Activated T-helper 1 cell treated with anti-CD3 and anti-CD28 coated beads, Interleukin-12 subunit alpha, Interleukin-12 subunit beta, Interleukin-2, Interleukin-4 antibody, amounts not matched to agents 30 ng/mL and 10 ng/mL and 1 ng/mL, durations not matched to agents 14 hours and 24 hours and 36 hours (primary cell): ENCODE measurements at regions of chr13 and their contacts with region 1.

Region 1: DNA sequence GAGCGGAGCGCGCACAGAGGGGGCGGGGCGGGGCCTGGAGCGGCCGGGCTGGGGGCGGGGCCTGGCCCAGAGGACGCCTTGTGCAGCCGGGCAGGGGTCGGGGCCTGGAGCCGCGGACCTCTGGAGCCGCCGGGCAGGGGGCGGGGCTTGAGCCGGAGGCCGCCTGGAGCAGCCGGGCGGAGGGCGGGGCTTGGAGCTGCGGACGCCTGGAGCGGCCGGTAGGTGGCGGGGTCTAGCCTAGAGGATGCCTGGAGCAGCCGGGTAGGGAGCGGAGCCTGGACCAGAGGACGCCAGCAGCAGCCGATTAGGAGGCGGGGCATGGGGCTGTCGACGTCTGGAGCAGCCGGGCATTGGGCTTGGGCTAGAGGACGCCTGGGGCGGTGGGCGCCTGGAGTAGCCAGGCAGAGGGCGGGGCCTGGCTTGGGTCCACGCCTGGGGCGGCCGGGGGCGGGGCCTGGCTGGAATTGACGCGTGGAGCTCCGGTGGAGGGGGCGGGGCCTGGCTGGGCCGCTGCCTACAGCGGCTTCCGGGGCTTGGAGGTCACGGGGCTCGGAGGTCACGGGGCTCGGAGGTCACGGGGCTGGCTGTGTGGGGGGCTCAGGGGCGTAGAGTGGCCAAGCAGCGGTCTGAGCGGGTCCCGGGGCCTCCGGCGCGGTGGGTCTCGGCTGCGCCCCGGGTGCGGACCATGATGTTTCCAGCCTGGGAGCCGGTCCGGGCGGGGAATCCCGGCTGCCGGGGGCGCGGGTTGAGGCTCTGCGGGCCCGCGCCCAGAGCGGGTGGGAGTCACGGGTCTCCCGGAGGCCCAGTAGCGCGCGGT is at the start of gene ANKRD10:
- DNase-seq: peak; percentile 95
- H3K4me3 Mint-ChIP-seq: peak within 1 kb of the TSS; percentile 94
- H3K27ac Mint-ChIP-seq: peak within 1 kb of the TSS; percentile 95
- H3K4me1 Mint-ChIP-seq: peaks cover 53% of the 10 kb centered on the region
- H3K27me3 Mint-ChIP-seq: no peaks in the 10 kb centered on the region
- total RNA-seq, gene ANKRD10: 163 and 176 TPM in 2 replicates

Region 2: GRCh38 chr13:110615322-110616102 is 299.8 kb before region 1 on chr13 and contains the start of gene NAXD:
- intact Hi-C with region 1: loop called (anchors 2 kb)
- DNase-seq: peak; percentile 80
- H3K4me3 Mint-ChIP-seq: peak within 1 kb of the TSS; percentile 96
- H3K27ac Mint-ChIP-seq: peak within 1 kb of the TSS; percentile 94
- H3K4me1 Mint-ChIP-seq: peaks cover 24% of the 10 kb centered on the region
- H3K27me3 Mint-ChIP-seq: peaks cover 4% of the 10 kb centered on the region
- total RNA-seq, gene NAXD: 22.0 and 22.2 TPM in 2 replicates

Region 3: DNA sequence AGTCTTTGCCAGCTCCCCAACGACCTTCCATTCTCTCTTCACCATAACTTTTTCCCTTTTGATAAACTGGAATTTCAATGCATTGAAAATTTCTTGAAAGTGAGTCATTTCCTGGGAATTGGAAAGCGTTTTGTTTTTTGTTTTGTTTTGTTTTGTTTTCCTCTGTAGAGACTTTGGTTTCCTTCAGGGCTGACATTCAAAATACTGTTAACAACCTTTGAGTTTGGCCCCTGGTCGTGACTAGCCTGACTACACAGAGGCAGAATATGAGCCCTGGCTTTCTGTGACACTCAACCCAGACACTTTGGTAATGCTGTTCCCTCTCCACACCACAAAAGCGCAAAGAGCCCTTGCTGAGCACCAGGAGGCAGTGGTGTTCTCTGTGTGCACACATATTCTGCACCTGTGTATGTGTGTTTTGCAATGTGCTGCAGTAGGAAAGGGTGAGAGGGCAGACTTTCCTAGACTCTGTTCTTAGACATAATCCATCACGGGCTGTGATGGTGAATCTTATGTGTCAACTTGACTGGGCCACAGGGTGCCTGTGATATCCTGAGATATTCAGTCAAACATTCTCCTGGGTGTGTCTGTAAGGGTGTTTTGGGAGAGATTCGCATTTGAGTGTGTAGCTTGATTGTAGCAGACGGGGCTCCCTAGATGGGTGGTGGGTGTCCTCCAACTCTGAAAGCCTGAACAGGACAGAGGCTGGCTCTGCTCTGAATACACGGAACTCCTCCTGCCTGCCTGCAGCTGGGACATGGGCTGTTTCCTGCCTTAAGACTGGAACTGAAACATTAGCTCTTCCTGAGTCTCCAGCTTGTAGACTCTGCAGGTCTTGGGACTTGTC is 29.1 kb after region 1 on chr13:
- intact Hi-C with region 1: loop called (anchors 1 kb)
- DNase-seq: peak; percentile 53
- H3K4me3 Mint-ChIP-seq: peak overlapping the region; percentile 51
- H3K27ac Mint-ChIP-seq: peak overlapping the region; percentile 87
- H3K4me1 Mint-ChIP-seq: peaks cover 56% of the 10 kb centered on the region
- H3K27me3 Mint-ChIP-seq: no peaks in the 10 kb centered on the region

Region 4: DNA sequence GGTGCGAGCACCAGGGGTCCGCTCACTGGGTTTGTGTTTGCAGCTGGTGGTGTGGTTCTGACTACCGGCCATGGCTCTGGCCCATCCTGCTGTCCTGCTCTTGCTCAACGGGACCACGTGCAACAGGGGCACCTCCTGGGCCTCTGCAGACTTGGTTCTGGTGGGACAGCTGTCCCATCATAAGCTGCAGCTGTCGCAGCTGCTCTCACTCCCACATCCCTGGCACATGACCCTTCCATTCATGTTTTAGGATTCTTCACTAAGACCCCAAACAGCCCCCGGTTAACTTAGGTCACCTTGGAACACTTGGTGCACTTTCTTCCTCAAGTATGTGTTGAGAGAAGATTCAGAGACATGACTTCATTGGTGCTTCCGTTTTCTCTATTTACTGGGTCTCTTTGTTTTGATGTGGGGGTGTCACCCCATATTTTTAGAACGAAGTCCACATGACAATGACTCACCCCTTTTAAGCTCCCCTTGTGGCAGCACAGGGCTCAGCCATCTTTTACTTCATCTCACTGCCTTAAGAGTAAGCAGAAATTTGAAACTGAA is 131.4 kb after region 1 on chr13:
- intact Hi-C with region 1: loop called (anchors 1 kb)
- DNase-seq: no peak
- H3K4me3 Mint-ChIP-seq: no peak overlapping the region
- H3K27ac Mint-ChIP-seq: peak overlapping the region; percentile 56
- H3K4me1 Mint-ChIP-seq: peaks cover 11% of the 10 kb centered on the region
- H3K27me3 Mint-ChIP-seq: peaks cover 8% of the 10 kb centered on the region

Region 5: DNA sequence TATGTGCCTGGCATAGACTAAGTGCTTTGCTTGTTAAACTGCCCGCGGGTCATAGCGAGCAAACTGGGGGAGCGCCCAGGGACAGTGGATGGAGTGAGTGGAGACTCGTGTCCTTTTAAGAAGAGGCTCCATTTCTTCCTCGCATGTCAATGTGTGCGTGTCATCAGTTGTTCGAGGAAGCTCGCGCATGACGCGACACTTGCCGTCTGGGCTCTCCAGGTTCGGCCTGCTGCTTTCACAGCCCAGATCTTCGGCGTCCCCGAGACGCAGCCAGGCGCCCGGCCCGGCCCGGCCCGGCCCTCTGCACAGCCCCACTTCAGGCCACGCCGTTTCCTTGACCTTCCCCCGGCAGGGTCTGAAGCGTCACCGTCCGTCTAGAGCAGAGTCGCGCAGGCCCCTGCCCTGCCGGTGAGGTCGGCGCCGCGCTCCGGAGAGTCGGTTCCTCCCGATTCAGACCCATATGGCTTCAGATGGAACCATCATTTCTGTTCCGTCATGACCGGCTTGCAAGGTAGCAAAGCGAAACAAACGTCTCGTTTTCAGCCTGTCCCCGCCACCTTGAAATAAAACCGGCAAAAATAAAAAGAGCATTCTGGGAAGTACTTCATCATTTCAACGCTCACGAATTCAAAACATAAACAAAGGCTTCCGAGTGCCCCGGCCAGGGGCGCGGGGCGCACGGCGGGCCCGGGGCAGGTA is 199.2 kb after region 1 on chr13:
- intact Hi-C with region 1: loop called (anchors 2 kb)
- DNase-seq: peak; percentile 5
- H3K4me3 Mint-ChIP-seq: peak overlapping the region; percentile 82
- H3K27ac Mint-ChIP-seq: peak overlapping the region; percentile 40
- H3K4me1 Mint-ChIP-seq: peaks cover 10% of the 10 kb centered on the region
- H3K27me3 Mint-ChIP-seq: peaks cover 84% of the 10 kb centered on the region

Region 6: DNA sequence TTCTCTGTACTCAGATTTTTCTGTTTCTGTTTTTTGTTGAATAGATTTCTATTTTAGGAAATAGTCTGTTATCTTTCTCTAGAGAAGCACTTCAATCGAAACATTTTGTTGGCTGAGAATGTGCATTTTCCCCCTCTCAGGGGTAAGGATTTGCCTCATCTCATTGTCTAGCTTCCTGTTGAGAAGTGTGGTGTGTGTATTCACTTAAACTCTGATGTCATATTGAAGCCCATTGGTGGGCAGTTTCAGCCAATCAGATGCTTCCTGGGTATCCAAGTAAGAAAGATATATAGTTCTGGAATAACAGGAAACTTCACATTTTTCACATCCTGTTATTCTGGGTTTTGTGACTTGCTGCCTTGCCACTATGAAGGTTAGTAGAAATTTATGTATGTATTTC is 287.5 kb after region 1 on chr13:
- intact Hi-C with region 1: loop called (anchors 5 kb)
- DNase-seq: no peak
- H3K4me3 Mint-ChIP-seq: no peak overlapping the region
- H3K27ac Mint-ChIP-seq: peak overlapping the region; percentile 31
- H3K4me1 Mint-ChIP-seq: peaks cover 55% of the 10 kb centered on the region
- H3K27me3 Mint-ChIP-seq: no peaks in the 10 kb centered on the region

Region 7: GRCh38 chr13:111539791-111540446 is 624.7 kb after region 1 on chr13:
- intact Hi-C with region 1: no loop called
- DNase-seq: no peak
- H3K4me3 Mint-ChIP-seq: no peak overlapping the region
- H3K27ac Mint-ChIP-seq: no peak overlapping the region
- H3K4me1 Mint-ChIP-seq: no peaks in the 10 kb centered on the region
- H3K27me3 Mint-ChIP-seq: peaks cover 15% of the 10 kb centered on the region